Caco-2 (cell line): ENCODE measurements at regions of chr20 and their contacts with region 1.

Region 1: GRCh38 chr20:44683263-44684046 is 31.7 kb upstream of the CCN5 start:
- DNase-seq: peak; percentile 91 to 94
- H3K4me3 ChIP-seq: no peak overlapping the region
- H3K4me3 Mint-ChIP-seq: peak overlapping the region; percentile 13
- H3K27ac Mint-ChIP-seq: peak overlapping the region; percentile 3
- H3K4me1 ChIP-seq: peaks cover 21% of the 10 kb centered on the region
- H3K4me1 Mint-ChIP-seq: peaks cover 28% of the 10 kb centered on the region
- H3K27me3 ChIP-seq: no peaks in the 10 kb centered on the region
- H3K27me3 Mint-ChIP-seq: no peaks in the 10 kb centered on the region
- CTCF ChIP-seq: peak; percentile 95 to 98

Region 2: DNA sequence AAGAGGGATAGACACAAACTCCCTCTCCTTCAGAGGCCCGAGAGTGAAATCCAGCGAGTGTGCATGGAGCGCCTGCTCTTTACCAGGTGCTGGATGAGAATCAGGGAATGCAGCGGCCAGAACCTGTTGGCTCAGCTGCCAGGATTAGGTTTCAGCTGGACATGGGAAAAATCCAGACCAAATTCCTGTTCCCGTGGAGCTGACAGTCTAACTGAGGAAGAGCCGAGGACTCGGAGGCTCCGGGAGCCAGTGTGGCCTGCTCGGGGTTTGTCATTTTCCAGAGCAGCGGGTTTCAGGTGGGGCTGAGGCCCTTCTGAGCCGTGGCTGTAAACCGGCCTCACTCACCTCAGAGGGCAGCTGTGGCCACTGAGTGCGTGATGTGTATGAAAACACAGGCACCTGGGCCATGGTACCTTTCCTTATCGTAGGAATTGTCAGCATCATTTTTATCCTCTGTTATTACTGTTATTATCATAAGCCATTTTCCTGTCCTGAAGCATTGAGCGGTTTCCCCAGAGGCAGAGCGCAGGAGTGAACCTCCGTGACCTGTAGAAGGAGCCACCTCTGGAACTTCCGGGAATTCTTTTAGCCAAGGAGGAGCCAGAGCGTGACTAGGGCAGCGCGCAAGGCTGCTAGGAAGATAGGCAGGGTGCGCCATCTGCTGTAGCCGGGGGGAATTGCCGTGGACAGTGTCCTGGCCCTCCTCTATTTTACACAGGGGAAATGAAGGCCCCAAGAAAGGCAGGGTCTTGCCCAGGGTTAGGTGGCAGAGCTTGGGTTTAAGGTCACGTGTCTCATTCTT is 73.7 kb before region 1 on chr20:
- CTCF ChIA-PET with region 1: interaction called, 6 read pairs
- POLR2A ChIA-PET with region 1: no interaction called
- intact Hi-C with region 1: loop called (anchors 1 kb)
- DNase-seq: peak; percentile 97 to 99
- H3K4me3 ChIP-seq: peak overlapping the region; percentile 19
- H3K4me3 Mint-ChIP-seq: peak overlapping the region; percentile 71
- H3K27ac Mint-ChIP-seq: peak overlapping the region; percentile 91
- H3K4me1 ChIP-seq: peaks cover 12% of the 10 kb centered on the region
- H3K4me1 Mint-ChIP-seq: peaks cover 9% of the 10 kb centered on the region
- H3K27me3 ChIP-seq: no peaks in the 10 kb centered on the region
- H3K27me3 Mint-ChIP-seq: no peaks in the 10 kb centered on the region
- CTCF ChIP-seq: peak; percentile 100

Region 3: GRCh38 chr20:44666066-44666465 is 17.4 kb before region 1 on chr20:
- CTCF ChIA-PET with region 1: interaction called, 12 read pairs
- POLR2A ChIA-PET with region 1: no interaction called
- intact Hi-C with region 1: no loop called
- DNase-seq: no peak
- H3K4me3 ChIP-seq: no peak overlapping the region
- H3K4me3 Mint-ChIP-seq: no peak overlapping the region
- H3K27ac Mint-ChIP-seq: no peak overlapping the region
- H3K4me1 ChIP-seq: 0 out of 2 replicates have a peak, but pooled peaks cover 3% of the 10 kb centered on the region
- H3K4me1 Mint-ChIP-seq: peaks cover 7% of the 10 kb centered on the region
- H3K27me3 ChIP-seq: no peaks in the 10 kb centered on the region
- H3K27me3 Mint-ChIP-seq: no peaks in the 10 kb centered on the region
- CTCF ChIP-seq: no peak

Region 4: DNA sequence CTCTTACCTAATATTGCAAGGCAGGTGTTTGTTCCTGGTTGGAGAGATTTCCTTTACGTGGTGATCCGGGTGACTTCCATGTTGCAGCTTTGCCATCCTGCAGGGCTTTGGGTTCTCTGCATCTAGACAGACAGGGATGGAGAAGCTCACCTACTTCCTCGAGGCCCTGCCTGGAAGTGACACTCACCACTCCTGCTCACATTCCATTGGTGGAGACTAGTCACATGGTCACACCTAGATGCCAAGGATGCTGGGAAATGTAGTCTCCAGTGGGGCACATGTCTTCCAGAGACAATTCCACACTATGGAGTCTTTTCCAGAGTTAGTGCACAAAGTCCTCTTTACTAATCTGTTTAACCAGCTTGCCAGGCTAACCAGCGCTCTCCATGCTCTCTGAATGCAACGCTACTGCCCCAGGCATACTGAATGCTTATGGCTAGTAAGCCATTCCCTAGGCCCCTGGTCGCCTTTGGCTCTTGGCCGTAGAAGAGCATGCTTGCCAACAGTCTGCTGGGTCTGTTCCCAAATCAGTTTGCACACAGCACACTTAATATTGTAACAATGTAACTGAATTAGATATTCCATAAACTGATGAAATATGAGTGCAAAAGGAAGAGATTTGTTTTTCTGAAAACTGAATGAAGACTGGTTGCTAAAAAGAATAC is 55.5 kb after region 1 on chr20:
- CTCF ChIA-PET with region 1: interaction called, 132 read pairs
- POLR2A ChIA-PET with region 1: interaction called, 3 read pairs
- intact Hi-C with region 1: no loop called
- DNase-seq: peak; percentile 96 to 98
- H3K4me3 ChIP-seq: no peak overlapping the region
- H3K4me3 Mint-ChIP-seq: peak overlapping the region; percentile 56
- H3K27ac Mint-ChIP-seq: no peak overlapping the region
- H3K4me1 ChIP-seq: peaks cover 12% of the 10 kb centered on the region
- H3K4me1 Mint-ChIP-seq: peaks cover 16% of the 10 kb centered on the region
- H3K27me3 ChIP-seq: no peaks in the 10 kb centered on the region
- H3K27me3 Mint-ChIP-seq: no peaks in the 10 kb centered on the region
- CTCF ChIP-seq: no peak

Region 5: GRCh38 chr20:44800398-44801046 is 117.1 kb after region 1 on chr20:
- CTCF ChIA-PET with region 1: interaction called, 3 read pairs
- POLR2A ChIA-PET with region 1: no interaction called
- intact Hi-C with region 1: loop called (anchors 5 kb)
- DNase-seq: peak in 1 of 2 experiments; percentile 35
- H3K4me3 ChIP-seq: no peak overlapping the region
- H3K4me3 Mint-ChIP-seq: no peak overlapping the region
- H3K27ac Mint-ChIP-seq: no peak overlapping the region
- H3K4me1 ChIP-seq: no peaks in the 10 kb centered on the region
- H3K4me1 Mint-ChIP-seq: no peaks in the 10 kb centered on the region
- H3K27me3 ChIP-seq: no peaks in the 10 kb centered on the region
- H3K27me3 Mint-ChIP-seq: peaks cover 4% of the 10 kb centered on the region
- CTCF ChIP-seq: peak; percentile 59 to 62

Region 6: DNA sequence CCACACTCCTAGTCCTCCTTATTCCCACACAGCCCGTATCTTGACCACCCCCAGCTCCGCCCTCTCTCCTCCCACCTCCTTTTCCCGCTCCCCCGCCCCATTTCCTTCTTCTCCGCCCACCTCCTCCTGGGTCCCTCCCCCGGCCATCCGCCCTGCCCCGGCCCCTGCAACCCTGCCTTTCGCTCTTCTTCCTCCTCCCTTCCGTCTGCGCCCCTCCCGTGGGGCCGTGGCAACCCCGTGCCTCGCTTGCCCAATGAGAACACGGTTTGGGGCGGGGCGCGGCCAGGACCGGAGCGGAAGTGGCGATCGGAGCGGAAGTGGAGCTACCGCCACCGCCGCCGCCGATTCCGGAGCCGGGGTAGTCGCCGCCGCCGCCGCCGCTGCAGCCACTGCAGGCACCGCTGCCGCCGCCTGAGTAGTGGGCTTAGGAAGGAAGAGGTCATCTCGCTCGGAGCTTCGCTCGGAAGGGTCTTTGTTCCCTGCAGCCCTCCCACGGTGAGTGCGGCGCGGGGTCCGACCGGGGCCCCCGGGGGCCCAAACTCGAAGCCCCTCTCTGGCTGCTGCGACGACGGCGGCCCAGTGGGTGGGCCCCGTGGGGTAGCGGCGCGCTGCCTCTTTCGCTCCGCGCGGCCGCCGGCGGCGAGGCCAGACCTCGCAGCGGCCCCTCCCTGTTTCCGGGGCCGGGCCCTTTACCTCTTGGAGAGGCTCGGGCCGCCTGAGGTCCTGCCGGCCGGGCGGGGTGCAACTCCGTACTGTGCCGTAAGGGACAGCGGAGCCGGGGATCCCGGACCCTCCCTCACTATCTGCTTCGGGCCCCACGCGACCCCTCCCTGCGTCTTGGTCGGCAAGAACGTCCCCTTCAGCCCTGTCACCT is 202.2 kb after region 1 on chr20 and contains the start of gene YWHAB:
- CTCF ChIA-PET with region 1: interaction called, 11 read pairs
- POLR2A ChIA-PET with region 1: interaction called, 3 read pairs
- intact Hi-C with region 1: no loop called
- DNase-seq: peak; percentile 100
- H3K4me3 ChIP-seq: peak within 1 kb of the TSS; percentile 98
- H3K4me3 Mint-ChIP-seq: peak within 1 kb of the TSS; percentile 99
- H3K27ac Mint-ChIP-seq: peak within 1 kb of the TSS; percentile 97
- H3K4me1 ChIP-seq: peaks cover 34% of the 10 kb centered on the region
- H3K4me1 Mint-ChIP-seq: peaks cover 34% of the 10 kb centered on the region
- H3K27me3 ChIP-seq: no peaks in the 10 kb centered on the region
- H3K27me3 Mint-ChIP-seq: no peaks in the 10 kb centered on the region
- CTCF ChIP-seq: peak; percentile 19 to 22
- total RNA-seq, gene YWHAB: 522 and 539 TPM in 2 replicates

Region 7: DNA sequence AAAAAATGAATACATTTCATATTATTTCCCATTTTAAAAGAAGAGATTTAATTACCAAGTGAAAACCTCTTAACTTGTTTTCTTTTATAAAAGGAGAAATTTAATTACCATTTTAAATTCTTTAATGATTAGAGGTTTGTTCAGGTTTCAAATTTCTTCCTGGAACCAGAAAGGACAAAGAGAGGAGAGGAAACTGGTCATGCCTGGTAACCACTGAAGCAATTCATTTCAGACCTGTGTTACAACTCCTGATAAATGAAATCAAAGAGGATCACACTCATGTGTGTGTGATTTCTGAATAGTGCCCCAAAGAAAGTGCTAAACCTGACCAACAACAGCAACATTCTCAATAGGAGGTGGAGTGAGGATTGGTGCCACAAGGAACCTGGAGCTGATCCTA is 583.5 kb after region 1 on chr20:
- CTCF ChIA-PET with region 1: no interaction called
- POLR2A ChIA-PET with region 1: no interaction called
- intact Hi-C with region 1: no loop called
- DNase-seq: no peak
- H3K4me3 ChIP-seq: no peak overlapping the region
- H3K4me3 Mint-ChIP-seq: no peak overlapping the region
- H3K27ac Mint-ChIP-seq: no peak overlapping the region
- H3K4me1 ChIP-seq: no peaks in the 10 kb centered on the region
- H3K4me1 Mint-ChIP-seq: no peaks in the 10 kb centered on the region
- H3K27me3 ChIP-seq: peaks cover 2% of the 10 kb centered on the region; the same call in 1 of the 2 replicates
- H3K27me3 Mint-ChIP-seq: peaks cover 25% of the 10 kb centered on the region
- CTCF ChIP-seq: no peak